ENCODE measurements at regions of chr13 and their contacts with region 1.

Region 1: GRCh38 chr13:50529154-50529882 is 314.2 kb downstream of the DLEU7 start:
- DNase-seq: peak; percentile 89
- H3K4me3 ChIP-seq: peak overlapping the region in 3 of 4 donors; percentile 2 to 20 (median 3)
- H3K27ac ChIP-seq: peak overlapping the region; percentile 48 to 62 (median 56)
- H3K4me1 ChIP-seq: peaks cover 0 to 43% (median 30%) of the 10 kb centered on the region in 4 donors
- H3K27me3 ChIP-seq: no peaks in the 10 kb centered on the region
- CTCF ChIP-seq: no peak
- EP300 ChIP-seq: no peak
- POLR2A ChIP-seq: no peak

Region 2: DNA sequence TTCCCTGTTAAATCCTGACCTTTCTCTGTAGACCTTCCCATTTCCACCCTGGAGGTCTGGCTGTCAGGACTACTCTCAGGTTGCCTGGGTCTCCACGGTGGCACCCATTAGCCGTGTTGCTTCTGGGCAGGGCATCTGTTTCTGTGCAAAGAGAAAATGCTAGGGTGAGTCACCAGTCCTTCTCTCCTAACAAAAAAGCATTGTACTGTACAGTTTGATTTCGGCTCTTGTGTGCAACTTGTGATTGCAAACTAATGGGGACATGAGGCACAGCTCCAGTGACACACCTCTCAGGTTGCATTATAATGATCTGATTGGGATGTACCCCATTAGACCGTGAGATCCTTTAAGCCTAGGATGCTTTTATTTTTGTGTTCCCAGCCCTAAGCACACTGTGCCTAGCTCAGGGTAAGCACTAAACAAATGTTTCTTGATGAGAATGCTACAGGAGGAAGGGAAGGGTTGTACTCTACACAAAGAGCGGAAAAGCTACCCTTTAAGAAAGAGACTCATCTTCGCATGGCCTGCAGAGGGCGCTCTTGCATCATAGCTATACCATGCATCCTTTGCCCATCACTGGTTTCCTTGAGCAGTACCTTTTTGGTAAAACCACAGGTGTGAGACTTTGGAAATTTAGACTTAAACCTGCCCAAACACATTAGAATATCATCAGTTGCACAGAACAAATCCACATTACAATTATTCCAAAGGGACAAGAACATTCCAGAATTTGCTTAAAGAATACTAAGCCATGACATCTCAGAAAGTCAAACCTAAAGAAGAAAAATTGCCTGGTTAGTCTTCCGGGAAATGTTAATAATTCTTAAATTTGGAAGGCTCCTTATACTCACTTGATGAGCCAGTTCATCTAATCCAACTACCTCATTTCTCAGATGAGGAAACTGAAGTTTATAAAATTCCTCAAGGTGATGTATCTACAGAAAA is 552.7 kb before region 1 on chr13:
- intact Hi-C with region 1: loop called (anchors 5 kb)
- DNase-seq: peak; percentile 79
- H3K4me3 ChIP-seq: no peak overlapping the region
- H3K27ac ChIP-seq: no peak overlapping the region
- H3K4me1 ChIP-seq: no peaks in the 10 kb centered on the region
- H3K27me3 ChIP-seq: no peaks in the 10 kb centered on the region
- CTCF ChIP-seq: peak; percentile 57 to 87 (median 78)
- EP300 ChIP-seq: no peak
- POLR2A ChIP-seq: no peak

Region 3: DNA sequence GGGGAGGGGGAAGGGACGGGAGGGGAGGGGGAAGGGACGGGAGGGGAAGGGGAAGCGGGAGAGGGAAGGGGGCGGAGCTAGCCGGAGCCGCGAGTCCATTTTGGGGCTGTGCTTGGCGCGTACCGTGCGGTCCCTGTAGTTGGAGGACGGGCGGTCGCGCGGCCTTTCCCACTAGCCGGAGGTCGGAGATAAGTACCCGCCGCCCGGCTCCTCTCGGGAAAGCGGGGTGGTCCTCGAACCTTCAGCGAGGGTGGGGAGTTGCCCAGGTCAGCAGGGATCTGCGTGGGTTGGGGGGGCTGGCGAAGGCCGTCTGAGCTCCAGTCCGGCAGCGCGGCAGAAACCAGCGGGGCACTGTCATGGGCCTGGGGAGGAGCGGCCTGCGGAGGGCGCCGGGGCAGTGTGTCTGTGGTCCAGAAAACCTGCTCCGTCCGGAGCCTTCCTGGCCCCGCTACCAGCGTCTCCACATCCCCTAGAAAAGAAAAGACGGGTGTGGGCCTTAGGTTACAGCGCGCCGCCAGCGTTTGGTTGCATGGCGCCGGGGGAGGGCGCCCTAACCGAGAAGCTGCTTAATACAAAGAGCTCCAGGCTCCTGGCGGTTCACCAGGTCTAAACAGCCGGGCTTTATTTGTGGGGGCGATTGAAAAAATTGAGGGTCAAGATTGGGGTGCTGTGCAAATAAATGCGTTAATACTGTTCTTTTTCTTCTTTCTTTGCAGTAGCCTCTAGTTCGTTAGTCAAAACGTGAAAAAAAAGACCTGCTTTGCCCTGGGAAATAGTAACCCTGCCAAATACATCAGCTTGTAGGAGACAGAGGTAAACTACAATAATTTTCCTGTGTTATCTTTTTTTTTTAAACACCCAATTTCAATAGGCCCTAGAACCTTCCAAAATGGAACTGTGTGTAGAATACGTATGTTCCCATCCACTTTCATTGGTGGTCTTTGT is 532.1 kb before region 1 on chr13 and contains the start of gene TRIM13:
- intact Hi-C with region 1: loop called (anchors 5 kb)
- DNase-seq: peak; percentile 95
- H3K4me3 ChIP-seq: peak within 1 kb of the TSS; percentile 78 to 89 (median 86)
- H3K27ac ChIP-seq: peak within 1 kb of the TSS; percentile 99 to 100 (median 99)
- H3K4me1 ChIP-seq: peaks cover 0 to 51% (median 46%) of the 10 kb centered on the region in 4 donors
- H3K27me3 ChIP-seq: no peaks in the 10 kb centered on the region
- CTCF ChIP-seq: peak; percentile 34 to 76 (median 64)
- EP300 ChIP-seq: no peak
- POLR2A ChIP-seq: peak; percentile 47 to 58
- total RNA-seq, gene TRIM13: 17.1 to 25.0 (median 22.9) TPM

Region 4: DNA sequence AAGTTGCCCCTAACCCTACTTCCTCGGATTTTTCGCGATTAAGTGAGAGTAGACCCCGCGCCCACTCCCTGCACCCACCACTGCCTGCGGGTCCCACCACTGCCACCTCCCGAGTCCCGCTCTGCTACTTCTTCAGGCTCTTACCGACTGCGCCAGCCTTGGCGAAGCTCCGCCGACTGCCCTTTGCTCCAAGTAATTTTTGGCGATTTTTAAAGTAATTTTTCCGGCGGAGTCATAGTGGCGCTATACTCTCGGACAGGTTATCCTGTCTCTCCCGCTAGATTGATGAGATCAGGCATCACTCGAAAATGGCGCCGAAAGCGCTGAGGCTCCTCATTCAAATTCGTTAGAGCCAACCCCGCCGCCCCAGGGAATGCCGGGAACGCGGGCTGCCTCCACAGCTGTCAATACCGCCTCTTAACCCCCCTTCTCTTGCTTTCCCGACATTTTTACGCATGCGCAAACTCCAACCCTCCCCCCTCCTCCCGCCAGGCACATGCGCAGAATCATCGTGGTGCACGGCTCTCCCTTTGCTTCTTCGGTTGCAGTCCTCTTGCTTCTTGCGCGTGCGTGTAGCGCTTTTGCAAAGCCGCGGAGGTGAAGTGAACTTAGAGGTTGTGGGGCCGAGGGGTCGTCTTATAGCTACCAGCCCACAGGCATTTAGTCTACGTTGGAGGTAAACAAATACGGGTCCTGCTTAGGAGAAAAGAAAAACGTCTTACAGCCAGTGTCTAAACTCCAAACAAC is 447.5 kb before region 1 on chr13:
- intact Hi-C with region 1: loop called (anchors 5 kb)
- DNase-seq: peak; percentile 99
- H3K4me3 ChIP-seq: peak overlapping the region; percentile 75 to 88 (median 79)
- H3K27ac ChIP-seq: peak overlapping the region; percentile 89 to 96 (median 91)
- H3K4me1 ChIP-seq: peaks cover 0 to 59% (median 27%) of the 10 kb centered on the region in 4 donors
- H3K27me3 ChIP-seq: peaks cover 0 to 9% (median 0%) of the 10 kb centered on the region in 3 donors
- CTCF ChIP-seq: no peak
- EP300 ChIP-seq: peak in 2 of 4 donors; percentile 4 to 7
- POLR2A ChIP-seq: peak; percentile 7 to 8

Region 5: DNA sequence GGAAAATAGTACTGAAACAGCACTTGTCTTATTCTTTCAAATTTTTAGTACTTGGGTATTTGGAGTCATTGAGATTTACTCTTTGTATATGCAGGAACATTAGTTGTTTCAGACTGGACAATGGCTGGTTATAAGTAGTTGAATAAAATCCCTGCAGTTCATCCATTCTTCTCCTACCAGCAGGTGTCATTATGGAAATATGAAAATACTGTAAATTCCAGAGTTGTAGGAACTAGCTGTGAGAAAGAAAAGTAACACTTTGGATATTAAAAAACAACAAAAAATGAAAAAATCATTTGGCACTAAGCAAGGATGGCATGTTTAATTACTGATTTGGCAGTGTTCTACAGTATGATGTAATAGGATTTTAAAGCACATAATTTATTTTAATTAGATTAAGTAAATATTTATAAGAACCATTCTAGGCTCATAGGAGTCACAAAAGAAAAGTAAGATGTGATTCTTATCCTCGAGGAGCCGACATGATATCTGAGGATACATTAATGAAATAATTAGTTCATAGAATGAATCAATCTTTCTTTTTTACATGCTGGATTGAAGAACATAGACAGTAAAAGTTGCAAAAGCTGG is 358.8 kb before region 1 on chr13:
- intact Hi-C with region 1: loop called (anchors 5 kb)
- DNase-seq: no peak
- H3K4me3 ChIP-seq: no peak overlapping the region
- H3K27ac ChIP-seq: no peak overlapping the region
- H3K4me1 ChIP-seq: no peaks in the 10 kb centered on the region
- H3K27me3 ChIP-seq: no peaks in the 10 kb centered on the region
- CTCF ChIP-seq: peak in 3 of 4 experiments; percentile 15 to 37 (median 37)
- EP300 ChIP-seq: no peak
- POLR2A ChIP-seq: no peak

Region 6: DNA sequence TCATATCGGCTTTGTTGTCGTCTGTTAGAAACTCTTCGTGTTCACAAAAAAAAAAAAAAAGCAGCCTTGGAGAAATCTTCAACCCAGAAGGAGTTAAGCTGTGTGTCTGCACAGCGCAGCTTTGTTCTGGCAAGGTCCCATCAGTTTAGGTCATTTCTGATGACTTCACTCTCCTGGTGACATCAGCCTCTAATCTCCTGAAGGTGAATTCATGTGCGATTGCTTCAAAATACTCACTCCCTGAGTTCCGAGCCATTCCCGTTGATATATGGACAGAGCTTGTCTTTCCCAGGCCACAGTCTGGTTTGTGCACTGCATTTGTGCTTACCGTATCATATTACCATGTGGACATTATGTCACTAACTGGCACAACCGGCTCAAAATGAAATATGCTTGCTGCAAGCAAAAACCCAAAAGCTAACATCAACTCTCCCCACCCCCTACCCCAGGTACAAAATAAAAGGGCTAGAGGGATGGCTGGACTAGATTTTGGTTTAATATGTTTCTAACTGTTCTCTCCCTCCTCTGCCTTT is 171.7 kb before region 1 on chr13:
- intact Hi-C with region 1: loop called (anchors 5 kb)
- DNase-seq: peak; percentile 67
- H3K4me3 ChIP-seq: no peak overlapping the region
- H3K27ac ChIP-seq: peak overlapping the region; percentile 23 to 78 (median 64)
- H3K4me1 ChIP-seq: peaks cover 0 to 36% (median 30%) of the 10 kb centered on the region in 4 donors
- H3K27me3 ChIP-seq: no peaks in the 10 kb centered on the region
- CTCF ChIP-seq: no peak
- EP300 ChIP-seq: no peak
- POLR2A ChIP-seq: no peak

Region 7: GRCh38 chr13:50911937-50912795 is 382.8 kb after region 1 on chr13:
- intact Hi-C with region 1: loop called (anchors 5 kb)
- DNase-seq: peak; percentile 91
- H3K4me3 ChIP-seq: no peak overlapping the region
- H3K27ac ChIP-seq: peak overlapping the region; percentile 55 to 91 (median 87)
- H3K4me1 ChIP-seq: peaks cover 0 to 42% (median 34%) of the 10 kb centered on the region in 4 donors
- H3K27me3 ChIP-seq: no peaks in the 10 kb centered on the region
- CTCF ChIP-seq: peak; percentile 54 to 81 (median 70)
- EP300 ChIP-seq: no peak
- POLR2A ChIP-seq: no peak

Measured in sigmoid colon (tissue), 7 donors.